CD4-positive, alpha-beta memory T cell (primary cell): ENCODE measurements at regions of chr19 and their contacts with region 1.

Region 1: GRCh38 chr19:7943444-7944176 is at the start of gene TIMM44:
- DNase-seq: peak; percentile 98 to 100 (median 99)
- H3K4me3 ChIP-seq: peak within 1 kb of the TSS; percentile 58 to 71
- H3K4me3 Mint-ChIP-seq: peak within 1 kb of the TSS; percentile 86 to 94 (median 92)
- H3K27ac ChIP-seq: peak within 1 kb of the TSS; percentile 92
- H3K27ac Mint-ChIP-seq: peak within 1 kb of the TSS; percentile 88 to 98 (median 97)
- H3K4me1 ChIP-seq: peaks cover 16% of the 10 kb centered on the region
- H3K4me1 Mint-ChIP-seq: peaks cover 11 to 45% (median 28%) of the 10 kb centered on the region in 4 donors
- H3K27me3 ChIP-seq: no peaks in the 10 kb centered on the region
- H3K27me3 Mint-ChIP-seq: no peaks in the 10 kb centered on the region
- total RNA-seq, gene TIMM44: 71.6 to 71.9 TPM

Region 2: GRCh38 chr19:7722231-7722651 is 221.4 kb before region 1 on chr19:
- CTCF ChIA-PET with region 1: no interaction called
- POLR2A ChIA-PET with region 1: no interaction called
- intact Hi-C with region 1: no loop called
- DNase-seq: no peak
- H3K4me3 ChIP-seq: no peak overlapping the region
- H3K4me3 Mint-ChIP-seq: no peak overlapping the region
- H3K27ac ChIP-seq: no peak overlapping the region
- H3K27ac Mint-ChIP-seq: no peak overlapping the region
- H3K4me1 ChIP-seq: peaks cover 5% of the 10 kb centered on the region
- H3K4me1 Mint-ChIP-seq: peaks cover 0 to 1% (median 0%) of the 10 kb centered on the region in 4 donors
- H3K27me3 ChIP-seq: no peaks in the 10 kb centered on the region
- H3K27me3 Mint-ChIP-seq: peaks cover under 1 to 4% of the 10 kb centered on the region in 2 donors

Region 3: DNA sequence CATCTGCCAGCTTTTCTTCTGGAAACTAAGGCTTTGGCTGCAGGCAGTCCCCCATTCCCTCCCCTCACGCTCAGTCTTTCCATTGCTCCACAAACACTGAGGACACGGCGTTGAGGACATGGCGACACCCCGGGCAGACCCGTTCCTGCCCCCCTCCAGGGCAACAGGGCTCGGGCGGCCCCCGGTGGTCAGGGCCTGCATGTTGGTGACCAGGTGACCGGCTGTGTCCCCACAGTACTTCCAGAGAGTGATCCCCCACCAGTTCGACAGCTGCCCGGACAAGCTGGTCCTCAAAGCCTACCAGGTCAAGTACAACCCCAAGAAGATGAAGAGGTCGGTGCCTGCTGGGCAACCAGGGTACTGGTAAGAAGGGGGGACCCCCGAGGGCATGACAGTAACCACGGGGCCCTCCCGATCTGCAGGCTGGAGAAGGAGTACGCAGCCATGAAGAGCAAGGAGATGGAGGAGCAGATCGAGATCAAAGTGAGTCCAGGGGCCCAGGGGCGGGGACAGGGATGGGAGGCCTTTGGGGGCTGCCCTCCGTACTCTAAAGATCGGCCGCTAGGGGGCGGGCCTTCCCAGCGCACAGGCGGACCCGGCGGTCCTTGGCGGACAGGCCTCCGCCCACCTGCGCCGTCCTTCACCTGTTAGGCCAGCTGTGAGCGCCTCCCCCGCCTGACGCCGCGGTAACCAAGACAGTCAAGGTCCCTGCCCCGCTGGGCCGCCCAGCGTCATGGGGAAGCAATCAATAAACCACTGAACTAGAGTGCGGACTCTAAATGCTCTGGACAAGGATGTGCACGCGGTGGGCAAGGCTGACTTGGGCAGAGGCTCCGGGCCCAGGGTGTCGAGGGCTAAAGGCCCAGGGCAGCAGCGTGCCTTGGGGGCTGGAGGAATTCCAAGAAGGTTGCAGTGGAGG is 90.5 kb before region 1 on chr19:
- CTCF ChIA-PET with region 1: interaction called, 12 read pairs
- POLR2A ChIA-PET with region 1: interaction called, 3 read pairs
- intact Hi-C with region 1: no loop called
- DNase-seq: peak; percentile 47 to 60 (median 54)
- H3K4me3 ChIP-seq: no peak overlapping the region
- H3K4me3 Mint-ChIP-seq: no peak overlapping the region
- H3K27ac ChIP-seq: no peak overlapping the region
- H3K27ac Mint-ChIP-seq: peak overlapping the region in 1 of 7 donors; percentile 77
- H3K4me1 ChIP-seq: peaks cover 8% of the 10 kb centered on the region
- H3K4me1 Mint-ChIP-seq: peaks cover 3 to 10% (median 6%) of the 10 kb centered on the region in 4 donors
- H3K27me3 ChIP-seq: no peaks in the 10 kb centered on the region
- H3K27me3 Mint-ChIP-seq: no peaks in the 10 kb centered on the region

Region 4: GRCh38 chr19:7903244-7904073 is 40.2 kb before region 1 on chr19 and contains the start of gene MAP2K7:
- CTCF ChIA-PET with region 1: interaction called, 10 read pairs
- POLR2A ChIA-PET with region 1: interaction called, 14 read pairs
- intact Hi-C with region 1: loop called (anchors 1 kb)
- DNase-seq: peak; percentile 100
- H3K4me3 ChIP-seq: peak within 1 kb of the TSS; percentile 61 to 96
- H3K4me3 Mint-ChIP-seq: peak within 1 kb of the TSS; percentile 88 to 99 (median 90)
- H3K27ac ChIP-seq: peak within 1 kb of the TSS; percentile 83
- H3K27ac Mint-ChIP-seq: peak within 1 kb of the TSS; percentile 94 to 100 (median 97)
- H3K4me1 ChIP-seq: peaks cover 32% of the 10 kb centered on the region
- H3K4me1 Mint-ChIP-seq: peaks cover 15 to 37% (median 26%) of the 10 kb centered on the region in 4 donors
- H3K27me3 ChIP-seq: no peaks in the 10 kb centered on the region
- H3K27me3 Mint-ChIP-seq: peaks cover 2 to 5% of the 10 kb centered on the region in 2 donors
- total RNA-seq, gene MAP2K7: 59.7 to 62.5 TPM

Region 5: GRCh38 chr19:7925171-7925851 is 18.3 kb before region 1 on chr19:
- CTCF ChIA-PET with region 1: interaction called, 66 read pairs
- POLR2A ChIA-PET with region 1: interaction called, 53 read pairs
- intact Hi-C with region 1: loop called (anchors 1 kb)
- DNase-seq: peak; percentile 70 to 78 (median 74)
- H3K4me3 ChIP-seq: no peak overlapping the region
- H3K4me3 Mint-ChIP-seq: peak overlapping the region; percentile 64 to 90 (median 83)
- H3K27ac ChIP-seq: no peak overlapping the region
- H3K27ac Mint-ChIP-seq: peak overlapping the region in 6 of 7 donors; percentile 53 to 84 (median 72)
- H3K4me1 ChIP-seq: peaks cover 24% of the 10 kb centered on the region
- H3K4me1 Mint-ChIP-seq: peaks cover 4 to 43% (median 24%) of the 10 kb centered on the region in 4 donors
- H3K27me3 ChIP-seq: no peaks in the 10 kb centered on the region
- H3K27me3 Mint-ChIP-seq: no peaks in the 10 kb centered on the region

Region 6: DNA sequence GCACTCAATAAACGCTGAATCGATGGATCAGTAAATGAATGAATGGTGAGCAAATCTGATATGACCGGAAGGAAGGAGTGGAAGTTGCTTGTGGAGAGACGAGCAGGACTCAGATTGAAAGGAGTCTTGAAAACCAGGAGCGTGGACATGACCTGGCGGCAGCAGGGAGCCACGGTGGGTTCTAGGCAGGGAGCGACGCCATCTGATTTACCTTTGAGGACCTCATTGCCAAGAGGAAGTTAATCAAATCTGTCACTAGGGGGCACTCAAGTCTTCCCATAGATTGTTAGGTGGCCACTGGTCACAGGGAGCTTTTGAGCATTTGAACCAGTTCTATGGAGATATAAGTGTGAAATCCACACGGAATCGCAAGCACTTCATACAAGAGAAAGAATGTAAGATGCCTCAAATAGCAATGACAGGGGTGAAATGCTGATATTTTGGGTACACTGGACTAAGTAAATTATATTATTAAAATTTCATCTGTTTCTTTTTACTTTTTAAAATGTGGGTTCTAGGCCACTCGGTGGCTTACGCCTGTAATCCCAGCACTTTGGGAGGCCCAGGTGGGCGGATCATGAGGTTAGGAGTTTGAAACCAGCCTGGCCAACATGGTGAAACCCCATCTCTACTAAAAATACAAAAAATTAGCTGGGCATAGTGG is 214.9 kb after region 1 on chr19:
- CTCF ChIA-PET with region 1: interaction called, 4 read pairs
- POLR2A ChIA-PET with region 1: no interaction called
- intact Hi-C with region 1: loop called (anchors 10 kb)
- DNase-seq: peak; percentile 57 to 70 (median 67)
- H3K4me3 ChIP-seq: no peak overlapping the region
- H3K4me3 Mint-ChIP-seq: no peak overlapping the region
- H3K27ac ChIP-seq: no peak overlapping the region
- H3K27ac Mint-ChIP-seq: peak overlapping the region in 1 of 7 donors; percentile 87
- H3K4me1 ChIP-seq: no peaks in the 10 kb centered on the region
- H3K4me1 Mint-ChIP-seq: peaks cover 4 to 6% (median 4%) of the 10 kb centered on the region in 4 donors
- H3K27me3 ChIP-seq: no peaks in the 10 kb centered on the region
- H3K27me3 Mint-ChIP-seq: peaks cover 11 to 12% of the 10 kb centered on the region in 2 donors

Region 7: GRCh38 chr19:8216357-8216756 is 272.7 kb after region 1 on chr19:
- CTCF ChIA-PET with region 1: no interaction called
- POLR2A ChIA-PET with region 1: no interaction called
- intact Hi-C with region 1: no loop called
- DNase-seq: no peak
- H3K4me3 ChIP-seq: no peak overlapping the region
- H3K4me3 Mint-ChIP-seq: peak overlapping the region in 1 of 8 donors; percentile 66
- H3K27ac ChIP-seq: no peak overlapping the region
- H3K27ac Mint-ChIP-seq: peak overlapping the region in 1 of 7 donors; percentile 52
- H3K4me1 ChIP-seq: peaks cover 3% of the 10 kb centered on the region
- H3K4me1 Mint-ChIP-seq: peaks cover 5 to 25% (median 19%) of the 10 kb centered on the region in 4 donors
- H3K27me3 ChIP-seq: no peaks in the 10 kb centered on the region
- H3K27me3 Mint-ChIP-seq: no peaks in the 10 kb centered on the region

Region 8: GRCh38 chr19:8252922-8253589 is 309.4 kb after region 1 on chr19:
- CTCF ChIA-PET with region 1: interaction called, 28 read pairs
- POLR2A ChIA-PET with region 1: interaction called, 4 read pairs
- intact Hi-C with region 1: loop called (anchors 1 kb)
- DNase-seq: peak; percentile 75 to 82 (median 78)
- H3K4me3 ChIP-seq: no peak overlapping the region
- H3K4me3 Mint-ChIP-seq: no peak overlapping the region
- H3K27ac ChIP-seq: no peak overlapping the region
- H3K27ac Mint-ChIP-seq: peak overlapping the region in 1 of 7 donors; percentile 77
- H3K4me1 ChIP-seq: peaks cover 7% of the 10 kb centered on the region
- H3K4me1 Mint-ChIP-seq: peaks cover 5 to 7% (median 6%) of the 10 kb centered on the region in 4 donors
- H3K27me3 ChIP-seq: no peaks in the 10 kb centered on the region
- H3K27me3 Mint-ChIP-seq: no peaks in the 10 kb centered on the region